Activated CD4-positive, alpha-beta T cell treated with anti-CD3 and anti-CD28 coated beads for 36 hours (primary cell): ENCODE measurements at regions of chr2 and their contacts with region 1.

Region 1: DNA sequence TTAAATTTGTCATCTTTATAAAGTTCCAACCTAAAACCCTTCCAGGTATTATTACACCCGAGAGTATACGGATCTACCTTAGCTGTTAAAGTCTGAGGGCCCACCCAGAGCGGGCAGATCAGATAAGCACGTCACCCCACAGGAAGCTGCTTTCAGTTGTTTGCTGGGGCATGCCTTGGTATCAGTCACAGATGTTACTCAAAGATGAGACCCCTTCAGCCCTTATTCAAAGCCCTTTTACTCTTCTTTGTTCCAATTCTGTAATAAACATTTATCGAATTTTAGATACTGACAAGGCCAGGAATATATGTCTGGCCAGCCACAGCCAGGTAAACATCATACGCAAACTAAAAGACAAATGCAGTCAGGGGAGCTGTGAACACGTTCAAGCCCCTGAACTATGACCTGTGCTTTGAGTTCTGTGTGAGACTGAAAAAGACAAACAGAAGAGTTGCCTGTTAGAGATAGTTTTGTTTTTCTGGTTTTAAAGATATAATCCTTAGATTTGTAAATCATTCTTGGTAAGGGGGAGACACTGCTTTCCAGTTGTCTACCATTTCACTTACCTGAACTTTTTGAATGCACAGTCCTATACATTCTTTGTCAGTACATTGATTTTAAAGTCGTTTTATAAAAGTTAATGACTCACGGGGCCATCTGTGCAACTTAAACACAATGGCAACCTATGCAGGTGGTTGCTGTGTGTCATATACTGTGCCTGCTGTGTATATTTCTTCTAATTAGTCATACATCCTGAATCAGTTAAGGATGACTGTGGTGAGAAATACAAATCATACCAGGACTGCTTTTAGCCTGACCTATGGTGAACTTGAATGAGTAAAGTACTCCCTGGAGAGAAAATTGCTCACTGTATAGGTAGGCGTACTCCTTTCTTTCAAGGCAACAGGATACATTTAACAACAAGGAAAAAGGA is 100.5 kb upstream of the ITPRID2 start:
- DNase-seq: peak; percentile 60
- ATAC-seq: peak; percentile 97
- H3K4me3 Mint-ChIP-seq: no peak overlapping the region
- H3K27ac Mint-ChIP-seq: peak overlapping the region; percentile 34
- H3K4me1 Mint-ChIP-seq: peaks cover 23% of the 10 kb centered on the region
- H3K27me3 Mint-ChIP-seq: peaks cover 6% of the 10 kb centered on the region

Region 2: GRCh38 chr2:181223234-181223633 is 567.7 kb before region 1 on chr2:
- CTCF ChIA-PET with region 1: no interaction called
- POLR2A ChIA-PET with region 1: no interaction called
- intact Hi-C with region 1: loop called in 1 of 2 experiments (anchors 5 kb)
- DNase-seq: no peak
- ATAC-seq: peak; percentile 42
- H3K4me3 Mint-ChIP-seq: no peak overlapping the region
- H3K27ac Mint-ChIP-seq: peak overlapping the region; percentile 79
- H3K4me1 Mint-ChIP-seq: peaks cover 19% of the 10 kb centered on the region
- H3K27me3 Mint-ChIP-seq: no peaks in the 10 kb centered on the region

Region 3: GRCh38 chr2:181466661-181467576 is 324.1 kb before region 1 on chr2:
- CTCF ChIA-PET with region 1: no interaction called
- POLR2A ChIA-PET with region 1: no interaction called
- intact Hi-C with region 1: loop called in 1 of 2 experiments (anchors 5 kb)
- DNase-seq: peak; percentile 90
- ATAC-seq: peak; percentile 22
- H3K4me3 Mint-ChIP-seq: no peak overlapping the region
- H3K27ac Mint-ChIP-seq: peak overlapping the region; percentile 17
- H3K4me1 Mint-ChIP-seq: peaks cover 86% of the 10 kb centered on the region
- H3K27me3 Mint-ChIP-seq: no peaks in the 10 kb centered on the region

Region 4: GRCh38 chr2:181523756-181524155 is 267.2 kb before region 1 on chr2:
- CTCF ChIA-PET with region 1: no interaction called
- POLR2A ChIA-PET with region 1: no interaction called
- intact Hi-C with region 1: no loop called
- DNase-seq: no peak
- ATAC-seq: no peak
- H3K4me3 Mint-ChIP-seq: no peak overlapping the region
- H3K27ac Mint-ChIP-seq: no peak overlapping the region
- H3K4me1 Mint-ChIP-seq: no peaks in the 10 kb centered on the region
- H3K27me3 Mint-ChIP-seq: no peaks in the 10 kb centered on the region

Region 5: DNA sequence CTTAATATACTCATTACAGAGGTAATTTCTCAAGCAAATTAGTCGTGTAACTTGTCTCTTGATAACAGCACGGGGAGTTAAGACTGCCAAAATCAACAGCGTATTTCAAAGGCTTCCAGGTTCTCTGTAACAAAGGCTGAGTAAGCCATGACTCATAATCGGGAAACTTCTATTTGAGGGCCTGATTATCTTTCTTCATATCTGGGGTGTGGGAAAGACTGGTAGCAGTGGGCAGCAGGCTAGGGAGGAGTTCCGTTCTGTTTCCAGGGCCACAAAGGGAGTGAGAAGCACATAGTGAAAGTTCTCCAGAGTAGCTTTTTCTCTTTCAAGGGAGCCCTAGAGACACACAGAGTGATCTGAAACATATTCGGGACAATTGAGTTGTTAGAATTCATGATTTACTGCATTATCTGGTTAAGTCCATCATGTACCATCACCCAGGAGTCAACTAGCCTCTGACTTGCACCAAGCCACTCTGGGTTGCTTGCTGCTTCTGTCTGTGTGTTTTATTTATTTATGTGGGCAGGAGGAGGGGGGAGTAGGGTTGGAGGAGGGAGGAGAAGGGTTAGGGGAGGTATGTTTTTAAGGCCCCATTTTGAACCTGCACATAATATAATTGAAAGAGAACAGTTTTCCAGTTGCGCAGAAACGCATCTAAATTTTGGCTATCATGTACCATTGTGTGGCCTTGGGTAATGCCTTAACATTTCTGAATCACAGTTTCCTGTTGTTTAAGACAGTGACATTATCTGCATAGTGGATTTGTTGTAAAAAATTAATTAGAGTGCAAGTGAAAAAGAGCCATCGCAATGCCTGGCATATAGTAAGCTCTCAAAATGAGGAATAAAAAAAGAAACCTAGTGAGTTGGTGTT is 20.1 kb after region 1 on chr2:
- CTCF ChIA-PET with region 1: no interaction called
- POLR2A ChIA-PET with region 1: no interaction called
- intact Hi-C with region 1: loop called in 1 of 2 experiments (anchors 2 kb)
- DNase-seq: no peak
- ATAC-seq: peak; percentile 57
- H3K4me3 Mint-ChIP-seq: no peak overlapping the region
- H3K27ac Mint-ChIP-seq: no peak overlapping the region
- H3K4me1 Mint-ChIP-seq: peaks cover 11% of the 10 kb centered on the region
- H3K27me3 Mint-ChIP-seq: peaks cover 7% of the 10 kb centered on the region

Region 6: DNA sequence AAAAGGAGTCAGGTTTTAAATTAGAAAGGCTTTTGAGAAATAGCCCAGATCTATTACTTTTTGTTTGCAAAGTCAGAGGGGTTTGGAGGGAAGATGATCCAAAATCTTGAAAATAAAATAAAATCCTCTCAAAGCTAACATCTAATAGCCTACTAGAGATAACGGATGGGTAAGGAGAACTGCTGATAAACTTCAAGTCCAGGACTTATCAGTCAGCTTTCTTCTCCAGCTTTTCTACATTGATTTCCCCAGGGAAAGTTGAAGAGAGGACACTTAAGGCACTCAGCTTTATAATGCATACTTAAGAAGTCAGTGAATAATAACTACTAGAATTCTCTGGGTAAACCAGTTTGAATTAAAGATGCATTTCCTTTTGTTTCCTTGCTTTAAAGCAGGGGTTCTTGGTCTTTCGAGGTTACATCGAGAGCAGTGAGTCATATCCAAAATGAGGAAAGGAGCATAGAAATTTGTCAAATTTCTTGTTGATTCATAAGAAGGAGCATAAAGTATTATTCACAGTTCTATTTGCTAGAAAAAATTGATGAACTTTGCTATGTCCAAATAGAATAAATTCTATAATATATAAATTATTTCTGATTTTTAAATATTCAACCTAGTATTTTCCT is 57.4 kb after region 1 on chr2:
- CTCF ChIA-PET with region 1: no interaction called
- POLR2A ChIA-PET with region 1: no interaction called
- intact Hi-C with region 1: loop called in 1 of 2 experiments (anchors 2 kb)
- DNase-seq: no peak
- ATAC-seq: peak; percentile 33
- H3K4me3 Mint-ChIP-seq: no peak overlapping the region
- H3K27ac Mint-ChIP-seq: no peak overlapping the region
- H3K4me1 Mint-ChIP-seq: peaks cover 9% of the 10 kb centered on the region
- H3K27me3 Mint-ChIP-seq: peaks cover 3% of the 10 kb centered on the region

Region 7: GRCh38 chr2:181904022-181904632 is 113.1 kb after region 1 on chr2:
- CTCF ChIA-PET with region 1: no interaction called
- POLR2A ChIA-PET with region 1: no interaction called
- intact Hi-C with region 1: loop called in 1 of 2 experiments (anchors 5 kb)
- DNase-seq: no peak
- ATAC-seq: no peak
- H3K4me3 Mint-ChIP-seq: no peak overlapping the region
- H3K27ac Mint-ChIP-seq: no peak overlapping the region
- H3K4me1 Mint-ChIP-seq: peaks cover 21% of the 10 kb centered on the region
- H3K27me3 Mint-ChIP-seq: no peaks in the 10 kb centered on the region

Region 8: GRCh38 chr2:183038341-183039300 is 1247.6 kb after region 1 on chr2 and contains the start of gene NCKAP1:
- CTCF ChIA-PET with region 1: no interaction called
- POLR2A ChIA-PET with region 1: no interaction called
- intact Hi-C with region 1: loop called in 1 of 2 experiments (anchors 10 kb)
- DNase-seq: peak; percentile 94
- ATAC-seq: peak; percentile 90
- H3K4me3 Mint-ChIP-seq: peak within 1 kb of the TSS; percentile 76
- H3K27ac Mint-ChIP-seq: peak within 1 kb of the TSS; percentile 63
- H3K4me1 Mint-ChIP-seq: peaks cover 26% of the 10 kb centered on the region
- H3K27me3 Mint-ChIP-seq: peaks cover 42% of the 10 kb centered on the region
- total RNA-seq, gene NCKAP1: 9.1 to 11.7 TPM